Activated CD4-positive, alpha-beta memory T cell treated with anti-CD3 and anti-CD28 coated beads for 36 hours (primary cell): ENCODE measurements at regions of chr12 and their contacts with region 1.

Region 1: DNA sequence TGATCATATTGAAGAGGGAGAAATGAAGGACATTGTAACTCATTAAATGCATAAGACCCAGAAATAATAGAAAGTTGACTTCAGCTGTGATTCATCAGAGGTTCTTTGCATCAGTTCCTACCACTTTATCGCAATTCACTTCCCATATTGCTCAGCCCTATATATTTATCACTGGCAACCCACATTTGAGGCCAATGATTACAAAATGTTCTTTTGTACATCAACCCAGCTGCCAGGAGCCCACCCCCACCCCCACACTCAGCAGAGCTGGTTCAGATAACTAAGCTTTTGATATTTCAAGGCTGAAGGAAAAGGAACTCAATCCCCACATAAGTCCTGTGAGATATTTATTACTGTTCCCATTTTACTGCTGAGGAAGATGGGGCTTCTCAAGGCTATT is 51.2 kb upstream of the TMPO start:
- DNase-seq: peak; percentile 18
- H3K4me3 Mint-ChIP-seq: no peak overlapping the region
- H3K27ac Mint-ChIP-seq: no peak overlapping the region
- H3K4me1 Mint-ChIP-seq: peaks cover 33% of the 10 kb centered on the region
- H3K27me3 Mint-ChIP-seq: peaks cover 4% of the 10 kb centered on the region

Region 2: GRCh38 chr12:98453070-98453469 is 11.1 kb before region 1 on chr12:
- CTCF ChIA-PET with region 1: no interaction called
- POLR2A ChIA-PET with region 1: no interaction called
- intact Hi-C with region 1: loop called (anchors 1 kb)
- DNase-seq: peak; percentile 53
- H3K4me3 Mint-ChIP-seq: no peak overlapping the region
- H3K27ac Mint-ChIP-seq: no peak overlapping the region
- H3K4me1 Mint-ChIP-seq: peaks cover 14% of the 10 kb centered on the region
- H3K27me3 Mint-ChIP-seq: peaks cover 32% of the 10 kb centered on the region

Region 3: GRCh38 chr12:98475565-98475908 is 11.3 kb after region 1 on chr12:
- CTCF ChIA-PET with region 1: no interaction called
- POLR2A ChIA-PET with region 1: no interaction called
- intact Hi-C with region 1: no loop called
- DNase-seq: no peak
- H3K4me3 Mint-ChIP-seq: no peak overlapping the region
- H3K27ac Mint-ChIP-seq: no peak overlapping the region
- H3K4me1 Mint-ChIP-seq: peaks cover 4% of the 10 kb centered on the region
- H3K27me3 Mint-ChIP-seq: no peaks in the 10 kb centered on the region